Activated T-helper 2 cell treated with anti-CD3 and anti-CD28 coated beads, Interferon-gamma antibody, Interleukin-2, Interleukin-4, amounts not matched to agents 10 μg/mL and 5 μg/mL and 100 μg/mL, durations not matched to agents 14 hours and 24 hours and 36 hours (primary cell): ENCODE measurements at regions of chr7 and their contacts with region 1.

Region 1: DNA sequence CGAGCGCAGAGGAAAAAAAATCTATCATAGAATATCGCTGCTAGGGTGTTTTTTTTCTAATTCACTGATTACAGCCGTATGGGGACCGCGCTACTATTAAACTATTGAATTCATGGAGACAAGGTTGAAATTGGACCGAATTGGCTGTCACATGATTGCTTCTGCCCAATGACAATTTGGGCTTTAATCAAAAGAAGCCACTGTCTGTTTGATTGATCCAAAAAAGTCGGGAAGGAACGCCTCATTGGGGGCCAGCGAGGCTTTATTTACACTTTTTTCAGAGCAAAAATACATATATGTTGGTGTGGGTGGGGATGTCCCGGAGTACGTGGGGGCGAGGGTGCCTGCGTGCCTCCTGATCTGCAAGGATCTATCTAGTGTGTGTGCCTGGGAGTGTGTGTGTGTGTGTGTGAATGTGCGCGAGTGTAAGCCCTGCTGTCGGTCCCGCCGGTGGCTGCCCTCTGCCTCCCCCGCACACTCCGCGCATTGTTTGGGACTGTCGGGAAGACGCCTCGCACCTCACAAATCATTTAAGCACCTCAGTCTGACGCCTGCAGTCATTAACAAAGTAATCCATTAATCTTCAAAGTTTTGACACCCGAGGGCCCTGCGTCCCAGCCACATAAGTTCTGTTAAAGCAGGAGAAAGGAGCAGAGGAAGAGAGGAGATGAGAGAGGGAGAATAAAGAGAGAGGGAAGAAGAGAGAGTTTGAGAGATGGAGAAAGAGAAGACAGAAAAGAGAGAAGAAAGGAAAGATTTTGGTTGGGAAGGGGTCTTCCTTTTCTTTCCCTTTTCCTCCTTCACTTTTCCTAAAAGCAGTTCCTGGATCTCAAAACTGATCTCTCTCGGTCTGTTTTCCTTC is at the start of gene HOXA2:
- DNase-seq: no peak
- H3K4me3 Mint-ChIP-seq: no peak within 1 kb of the TSS
- H3K27ac Mint-ChIP-seq: no peak within 1 kb of the TSS
- H3K4me1 Mint-ChIP-seq: peaks cover 9% of the 10 kb centered on the region
- H3K27me3 Mint-ChIP-seq: peaks cover 78% of the 10 kb centered on the region
- total RNA-seq, gene HOXA2: not detected in 2 replicates

Region 2: DNA sequence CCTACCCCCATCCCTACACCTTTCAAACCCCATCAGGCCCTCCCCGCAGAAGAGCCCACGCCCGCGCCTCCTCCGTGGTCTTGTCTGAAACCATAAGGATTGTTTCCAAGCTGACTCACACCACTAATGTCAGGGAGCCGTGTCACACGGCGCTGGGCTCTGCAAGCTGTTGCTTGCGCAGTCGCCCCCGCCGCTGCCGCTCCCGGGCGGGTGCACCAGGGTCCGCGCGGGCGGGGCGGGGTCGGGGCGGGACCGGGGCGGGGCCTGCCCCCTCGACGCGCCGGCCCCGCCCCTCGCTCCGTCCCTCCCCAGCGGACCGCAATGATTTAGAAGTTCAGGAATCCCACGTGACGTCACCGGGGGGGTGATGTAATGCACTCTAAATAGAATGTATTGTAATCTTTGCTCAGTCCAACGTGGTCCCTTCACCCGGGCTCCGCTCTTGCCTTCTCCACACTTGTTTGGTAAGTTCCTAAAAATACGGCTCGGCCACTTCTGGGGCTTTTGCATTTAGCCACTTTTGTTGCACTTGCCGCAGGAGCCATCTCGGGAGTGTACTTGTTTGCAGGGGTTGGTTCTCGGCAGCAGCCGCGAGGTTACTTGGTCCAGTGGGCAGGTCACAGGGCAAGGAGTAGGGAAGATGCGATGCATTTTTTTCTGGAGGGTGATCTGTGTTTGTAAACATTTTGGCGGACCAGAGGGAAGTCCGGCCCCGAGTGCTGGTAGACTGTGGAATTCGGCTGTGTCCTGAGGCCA is 1306.3 kb after region 1 on chr7:
- intact Hi-C with region 1: loop called (anchors 5 kb)
- DNase-seq: peak; percentile 37
- H3K4me3 Mint-ChIP-seq: peak overlapping the region; percentile 77
- H3K27ac Mint-ChIP-seq: peak overlapping the region; percentile 48
- H3K4me1 Mint-ChIP-seq: peaks cover 27% of the 10 kb centered on the region
- H3K27me3 Mint-ChIP-seq: peaks cover 57% of the 10 kb centered on the region